ENCODE measurements at regions of chr12 and their contacts with region 1.

Region 1: DNA sequence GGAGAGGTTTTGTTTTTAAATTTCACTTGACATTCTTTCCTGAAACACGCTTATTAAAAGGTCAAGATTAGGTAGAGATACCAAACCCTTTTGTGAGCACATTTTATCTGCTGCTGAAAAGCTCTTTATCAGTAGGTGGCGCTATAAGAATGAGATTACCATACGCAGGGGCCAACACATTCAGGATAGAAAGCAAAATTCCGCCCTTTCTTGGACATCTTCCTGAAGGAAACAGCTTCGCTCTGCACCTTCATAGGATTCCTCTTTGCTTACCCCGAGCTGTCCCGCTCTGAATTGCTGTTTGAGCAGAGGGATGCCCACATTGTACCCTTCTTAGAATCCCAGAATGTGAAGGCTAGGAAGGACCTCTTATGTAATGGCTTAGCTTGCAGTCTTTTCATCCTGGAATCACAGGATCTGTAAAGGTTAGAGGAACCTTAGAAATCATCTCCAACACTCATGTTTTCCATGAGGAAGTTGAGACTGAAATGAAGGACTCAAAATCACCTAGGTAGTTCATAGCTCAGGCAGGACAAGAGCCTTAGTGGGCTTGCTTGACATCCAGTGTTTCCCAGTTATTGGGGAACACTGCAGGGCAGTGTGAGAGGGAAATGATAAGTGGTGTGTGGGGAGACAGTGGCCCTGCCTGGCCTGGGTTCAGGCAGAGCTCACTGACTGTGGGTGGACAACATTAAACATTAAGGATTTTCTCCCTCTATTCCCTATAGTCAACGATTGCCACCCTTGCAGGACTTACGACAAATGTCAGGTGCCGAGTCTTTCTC is 38.7 kb upstream of the CRY1 start:
- DNase-seq: no peak
- ATAC-seq: peak; percentile 75
- H3K4me3 ChIP-seq: no peak overlapping the region
- H3K27ac ChIP-seq: no peak overlapping the region
- H3K4me1 ChIP-seq: no peaks in the 10 kb centered on the region
- H3K27me3 ChIP-seq: no peaks in the 10 kb centered on the region; a peak in 1 of 4 replicates
- CTCF ChIP-seq: peak; percentile 68 to 87 (median 81)
- EP300 ChIP-seq: no peak
- POLR2A ChIP-seq: no peak
- RAD21 ChIP-seq: peak; percentile 91

Region 2: DNA sequence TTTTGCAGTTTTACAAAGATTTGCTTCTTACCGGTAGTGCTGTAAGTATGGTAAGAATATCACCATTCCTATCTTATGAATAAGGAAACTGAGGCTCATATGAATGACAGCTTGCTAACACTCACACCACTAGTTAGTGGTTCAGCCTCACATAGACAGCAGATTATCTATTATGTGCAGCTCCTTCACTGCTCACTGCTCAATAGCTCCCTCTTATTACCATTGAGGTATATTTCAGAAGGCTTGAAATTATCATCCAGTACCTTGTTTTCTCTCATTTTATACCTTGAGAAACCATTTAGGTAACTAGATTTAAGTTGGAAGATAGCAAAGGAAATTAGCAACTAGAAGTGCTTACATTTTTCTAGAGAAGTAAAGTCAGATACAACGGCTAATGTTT is 342.0 kb before region 1 on chr12:
- CTCF ChIA-PET with region 1: no interaction called
- POLR2A ChIA-PET with region 1: no interaction called
- RAD21 ChIA-PET with region 1: no interaction called
- SMC1A ChIA-PET with region 1: no interaction called
- in situ Hi-C with region 1: no loop called
- intact Hi-C with region 1: no loop called
- DNase-seq: no peak
- ATAC-seq: peak; percentile 69
- H3K4me3 ChIP-seq: no peak overlapping the region
- H3K27ac ChIP-seq: no peak overlapping the region
- H3K4me1 ChIP-seq: no peaks in the 10 kb centered on the region
- H3K27me3 ChIP-seq: no peaks in the 10 kb centered on the region
- CTCF ChIP-seq: peak in 2 of 3 experiments; percentile 13 to 27; a peak in 1 of 6 replicates
- EP300 ChIP-seq: no peak
- POLR2A ChIP-seq: no peak
- RAD21 ChIP-seq: peak; percentile 29

Region 3: DNA sequence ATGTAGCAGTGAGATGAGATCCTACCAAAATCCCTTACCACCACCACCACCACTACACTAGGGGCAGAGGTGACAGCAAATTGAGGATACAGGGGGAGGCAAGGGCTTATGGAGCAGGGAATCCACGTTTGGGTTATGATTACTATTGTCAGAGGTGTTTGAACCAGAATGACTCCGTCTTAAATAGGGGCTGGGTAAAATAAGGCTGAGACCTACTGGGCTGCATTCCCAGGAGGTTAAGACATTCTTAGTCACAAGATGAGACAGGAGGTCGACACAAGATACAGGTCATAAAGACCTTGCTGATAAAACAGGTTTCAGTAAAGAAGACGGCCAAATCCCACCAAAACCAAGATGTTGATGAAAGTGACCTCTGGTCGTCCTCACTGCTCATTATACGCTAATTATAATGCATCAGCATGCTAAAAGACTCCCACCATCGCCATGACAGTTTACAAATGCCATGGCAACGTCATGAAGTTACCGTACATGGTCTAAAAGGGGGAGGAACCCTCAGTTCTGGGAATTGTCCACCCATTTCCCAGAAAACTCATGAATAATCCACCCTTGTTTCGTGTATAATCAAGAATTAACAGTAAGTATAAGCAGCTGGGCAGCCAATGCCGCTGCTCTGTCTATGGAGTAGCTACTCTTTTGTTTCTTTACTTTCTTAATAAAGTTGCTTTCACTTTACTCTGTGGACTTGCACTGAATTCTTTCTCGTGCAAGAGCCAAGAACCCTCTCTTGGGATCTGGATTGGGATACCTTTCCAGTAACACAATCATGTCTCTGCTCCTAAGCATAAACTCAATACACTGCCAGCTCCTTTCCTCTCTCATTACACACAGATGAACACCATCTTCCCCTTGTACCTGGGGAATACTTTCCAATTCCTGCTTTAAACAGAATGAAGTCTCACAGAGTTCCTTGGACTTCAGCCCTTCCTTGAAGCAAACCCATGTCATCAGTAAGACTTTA is 22.0 kb before region 1 on chr12:
- CTCF ChIA-PET with region 1: interaction called, 13 read pairs
- POLR2A ChIA-PET with region 1: no interaction called
- RAD21 ChIA-PET with region 1: interaction called, 4 read pairs
- SMC1A ChIA-PET with region 1: interaction called, 4 read pairs
- in situ Hi-C with region 1: no loop called
- intact Hi-C with region 1: no loop called
- DNase-seq: no peak
- ATAC-seq: no peak
- H3K4me3 ChIP-seq: no peak overlapping the region
- H3K27ac ChIP-seq: no peak overlapping the region
- H3K4me1 ChIP-seq: no peaks in the 10 kb centered on the region
- H3K27me3 ChIP-seq: peaks cover 0 to 3% of the 10 kb centered on the region in 2 experiments; a peak in 1 of 4 replicates
- CTCF ChIP-seq: no peak
- EP300 ChIP-seq: no peak
- POLR2A ChIP-seq: no peak
- RAD21 ChIP-seq: no peak

Region 4: GRCh38 chr12:107145397-107145796 is 13.4 kb after region 1 on chr12:
- CTCF ChIA-PET with region 1: interaction called, 24 read pairs
- POLR2A ChIA-PET with region 1: no interaction called
- RAD21 ChIA-PET with region 1: no interaction called
- SMC1A ChIA-PET with region 1: interaction called, 3 read pairs
- in situ Hi-C with region 1: no loop called
- intact Hi-C with region 1: no loop called
- DNase-seq: no peak
- ATAC-seq: no peak
- H3K4me3 ChIP-seq: no peak overlapping the region
- H3K27ac ChIP-seq: no peak overlapping the region
- H3K4me1 ChIP-seq: no peaks in the 10 kb centered on the region
- H3K27me3 ChIP-seq: peaks cover 0 to 2% of the 10 kb centered on the region in 2 experiments; a peak in 1 of 4 replicates
- CTCF ChIP-seq: no peak
- EP300 ChIP-seq: no peak
- POLR2A ChIP-seq: no peak
- RAD21 ChIP-seq: no peak

Region 5: GRCh38 chr12:107207931-107208525 is 76.0 kb after region 1 on chr12:
- CTCF ChIA-PET with region 1: no interaction called
- POLR2A ChIA-PET with region 1: no interaction called
- RAD21 ChIA-PET with region 1: no interaction called
- SMC1A ChIA-PET with region 1: no interaction called
- in situ Hi-C with region 1: no loop called
- intact Hi-C with region 1: no loop called
- DNase-seq: no peak
- ATAC-seq: no peak
- H3K4me3 ChIP-seq: no peak overlapping the region
- H3K27ac ChIP-seq: no peak overlapping the region
- H3K4me1 ChIP-seq: no peaks in the 10 kb centered on the region
- H3K27me3 ChIP-seq: no peaks in the 10 kb centered on the region
- CTCF ChIP-seq: no peak
- EP300 ChIP-seq: no peak
- POLR2A ChIP-seq: no peak
- RAD21 ChIP-seq: no peak

Region 6: DNA sequence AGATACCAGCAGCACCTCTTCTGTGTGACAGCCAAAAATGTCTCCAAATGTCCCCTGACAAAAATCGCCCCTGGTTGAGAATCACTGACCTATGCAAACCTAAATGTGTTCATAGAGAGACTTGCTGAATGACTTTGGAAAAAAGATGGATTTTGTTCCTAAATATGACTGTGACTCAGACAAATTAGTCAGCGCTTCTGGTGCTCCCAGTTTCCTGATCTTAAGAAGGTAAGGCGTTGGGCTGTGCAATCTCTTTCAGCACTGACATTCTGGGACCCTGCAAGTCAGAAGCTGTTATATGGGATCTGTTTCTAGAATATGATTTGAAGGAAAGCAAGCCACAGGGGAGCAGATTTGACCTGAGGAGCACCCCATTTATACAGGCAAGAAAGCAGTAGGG is 463.0 kb after region 1 on chr12:
- CTCF ChIA-PET with region 1: interaction called, 17 read pairs
- POLR2A ChIA-PET with region 1: no interaction called
- RAD21 ChIA-PET with region 1: interaction called, 3 read pairs
- SMC1A ChIA-PET with region 1: interaction called, 4 read pairs
- in situ Hi-C with region 1: no loop called
- intact Hi-C with region 1: no loop called
- DNase-seq: no peak
- ATAC-seq: no peak
- H3K4me3 ChIP-seq: no peak overlapping the region
- H3K27ac ChIP-seq: no peak overlapping the region
- H3K4me1 ChIP-seq: no peaks in the 10 kb centered on the region
- H3K27me3 ChIP-seq: no peaks in the 10 kb centered on the region
- CTCF ChIP-seq: no peak
- EP300 ChIP-seq: no peak
- POLR2A ChIP-seq: no peak
- RAD21 ChIP-seq: no peak

Region 7: GRCh38 chr12:107622005-107622404 is 490.0 kb after region 1 on chr12:
- CTCF ChIA-PET with region 1: interaction called, 12 read pairs
- POLR2A ChIA-PET with region 1: no interaction called
- RAD21 ChIA-PET with region 1: no interaction called
- SMC1A ChIA-PET with region 1: no interaction called
- in situ Hi-C with region 1: no loop called
- intact Hi-C with region 1: no loop called
- DNase-seq: no peak
- ATAC-seq: peak; percentile 43; the same call in 2 of the 3 replicates
- H3K4me3 ChIP-seq: no peak overlapping the region
- H3K27ac ChIP-seq: no peak overlapping the region
- H3K4me1 ChIP-seq: no peaks in the 10 kb centered on the region
- H3K27me3 ChIP-seq: peaks cover 0 to 2% of the 10 kb centered on the region in 2 experiments; a peak in 1 of 4 replicates
- CTCF ChIP-seq: peak; percentile 42 to 67 (median 62); a peak in 5 of 6 replicates
- EP300 ChIP-seq: no peak
- POLR2A ChIP-seq: no peak
- RAD21 ChIP-seq: peak; percentile 33; the same call in 1 of the 2 replicates